Body of pancreas (tissue), 4 donors: ENCODE measurements at regions of chr22 and their contacts with region 1.

Region 1: GRCh38 chr22:25582946-25583345 is 18.5 kb downstream of the GRK3 start:
- DNase-seq: no peak
- ATAC-seq: no peak
- H3K4me3 ChIP-seq: no peak overlapping the region
- H3K27ac ChIP-seq: no peak overlapping the region
- H3K4me1 ChIP-seq: peaks cover 5% of the 10 kb centered on the region
- H3K27me3 ChIP-seq: no peaks in the 10 kb centered on the region
- CTCF ChIP-seq: no peak
- POLR2A ChIP-seq: no peak

Region 2: GRCh38 chr22:25282671-25283561 is 300.0 kb before region 1 on chr22:
- intact Hi-C with region 1: loop called (anchors 10 kb)
- DNase-seq: no peak
- ATAC-seq: no peak
- H3K4me3 ChIP-seq: no peak overlapping the region
- H3K27ac ChIP-seq: no peak overlapping the region
- H3K4me1 ChIP-seq: peaks cover 10% of the 10 kb centered on the region
- H3K27me3 ChIP-seq: peaks cover 0 to 10% of the 10 kb centered on the region in 2 donors
- CTCF ChIP-seq: no peak
- POLR2A ChIP-seq: no peak

Region 3: DNA sequence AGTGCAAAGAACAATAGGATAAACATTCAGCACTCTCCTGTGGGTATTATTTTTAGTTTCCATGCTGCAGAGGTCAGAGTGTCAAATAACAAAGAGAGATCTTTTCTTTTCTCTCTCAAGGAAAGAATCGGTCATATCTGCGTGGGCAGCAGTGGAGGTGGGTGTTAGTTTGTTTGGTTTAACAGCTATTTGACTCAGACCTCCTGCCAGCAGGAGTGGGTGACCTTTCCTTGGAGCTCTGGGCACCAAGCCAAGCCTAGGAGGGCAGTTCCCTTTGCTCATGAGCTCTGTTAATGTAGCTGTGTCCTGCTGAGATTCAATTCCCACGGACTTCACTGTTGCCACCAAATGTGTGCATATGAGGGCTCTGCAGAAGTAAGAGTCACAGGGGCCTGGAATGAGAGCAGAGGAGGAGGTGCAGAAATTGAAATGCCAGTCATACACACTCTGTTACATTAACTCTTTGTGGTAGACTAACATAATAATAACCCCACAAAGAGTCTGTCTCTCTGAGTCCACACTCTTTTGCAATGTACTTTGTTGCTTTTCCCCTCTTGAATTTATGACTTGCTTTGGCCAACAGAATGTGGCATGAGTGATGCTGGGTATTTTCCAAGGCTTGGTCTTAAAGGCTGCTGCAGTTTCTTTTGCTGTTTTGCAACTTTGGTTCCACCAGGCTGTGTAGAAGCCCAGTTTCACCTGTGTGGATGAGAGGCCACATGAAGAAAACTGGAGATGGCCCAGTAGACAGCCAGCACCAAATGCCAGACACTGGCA is 94.5 kb before region 1 on chr22:
- intact Hi-C with region 1: no loop called
- DNase-seq: peak; percentile 73 to 88 (median 86)
- ATAC-seq: peak; percentile 80
- H3K4me3 ChIP-seq: no peak overlapping the region
- H3K27ac ChIP-seq: peak overlapping the region; percentile 11 to 65 (median 34)
- H3K4me1 ChIP-seq: peaks cover 44% of the 10 kb centered on the region
- H3K27me3 ChIP-seq: no peaks in the 10 kb centered on the region
- CTCF ChIP-seq: no peak
- POLR2A ChIP-seq: no peak

Region 4: DNA sequence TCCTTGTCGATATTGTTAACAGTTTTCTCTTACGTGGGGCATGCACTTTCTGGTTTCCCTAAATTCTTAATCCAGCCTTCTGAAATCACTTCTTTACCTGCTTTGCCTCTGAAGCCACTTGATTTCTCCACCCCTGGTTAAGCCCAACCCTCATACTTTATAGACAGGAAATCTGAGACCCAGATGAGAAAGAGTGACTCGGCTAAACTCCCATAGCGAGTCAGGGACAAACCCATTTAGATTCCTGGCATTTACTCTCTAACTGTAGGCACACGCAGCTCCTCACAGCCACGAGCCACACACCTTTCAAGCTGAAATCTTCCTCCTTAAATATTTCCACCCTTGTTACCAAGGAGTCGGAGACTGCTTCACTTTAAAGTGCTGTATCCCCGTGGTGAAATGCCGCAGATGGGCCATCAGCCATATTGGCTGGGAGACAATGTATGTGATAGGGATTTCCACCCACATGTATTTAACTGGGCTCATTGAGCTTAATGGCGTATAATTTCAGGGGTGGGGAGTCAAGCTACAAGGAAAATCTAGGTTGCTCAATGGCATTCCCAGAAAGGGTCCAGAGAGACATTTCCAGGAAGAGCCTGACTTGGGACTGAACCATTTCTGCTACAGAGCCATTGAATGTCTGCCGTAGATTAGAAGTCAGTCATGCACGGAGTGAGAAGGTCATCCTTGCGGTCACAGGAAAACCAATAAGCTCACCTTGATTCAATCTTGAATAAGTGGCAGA is 68.3 kb before region 1 on chr22:
- intact Hi-C with region 1: no loop called
- DNase-seq: no peak
- ATAC-seq: no peak
- H3K4me3 ChIP-seq: no peak overlapping the region
- H3K27ac ChIP-seq: no peak overlapping the region
- H3K4me1 ChIP-seq: no peaks in the 10 kb centered on the region
- H3K27me3 ChIP-seq: no peaks in the 10 kb centered on the region
- CTCF ChIP-seq: no peak
- POLR2A ChIP-seq: no peak

Region 5: GRCh38 chr22:25525376-25525775 is 57.6 kb before region 1 on chr22:
- intact Hi-C with region 1: no loop called
- DNase-seq: no peak
- ATAC-seq: no peak
- H3K4me3 ChIP-seq: no peak overlapping the region
- H3K27ac ChIP-seq: peak overlapping the region in 2 of 4 donors; percentile 34 to 40
- H3K4me1 ChIP-seq: no peaks in the 10 kb centered on the region
- H3K27me3 ChIP-seq: no peaks in the 10 kb centered on the region
- CTCF ChIP-seq: no peak
- POLR2A ChIP-seq: no peak